ENCODE measurements at regions of chr3 and their contacts with region 1.

Region 1: GRCh38 chr3:138923531-138923994 is 23.4 kb downstream of the FOXL2 start:
- DNase-seq: peak; percentile 68 to 91 (median 76)
- ATAC-seq: peak; percentile 95
- H3K4me3 ChIP-seq: no peak overlapping the region
- H3K27ac ChIP-seq: no peak overlapping the region
- H3K4me1 ChIP-seq: peaks cover 2 to 3% of the 10 kb centered on the region in 2 experiments; a peak in 4 of 5 replicates
- H3K27me3 ChIP-seq: no peaks in the 10 kb centered on the region
- CTCF ChIP-seq: peak; percentile 86 to 95 (median 95)
- EP300 ChIP-seq: no peak
- POLR2A ChIP-seq: no peak
- RAD21 ChIP-seq: peak; percentile 78 to 93

Region 2: GRCh38 chr3:138417559-138417982 is 506.0 kb before region 1 on chr3:
- CTCF ChIA-PET with region 1: interaction called, 3 read pairs
- POLR2A ChIA-PET with region 1: no interaction called
- in situ Hi-C with region 1: no loop called
- intact Hi-C with region 1: loop called (anchors 2 kb)
- DNase-seq: peak; percentile 67 to 79 (median 70)
- ATAC-seq: peak; percentile 98
- H3K4me3 ChIP-seq: no peak overlapping the region
- H3K27ac ChIP-seq: no peak overlapping the region
- H3K4me1 ChIP-seq: no peaks in the 10 kb centered on the region; a peak in 1 of 5 replicates
- H3K27me3 ChIP-seq: no peaks in the 10 kb centered on the region
- CTCF ChIP-seq: peak; percentile 87 to 96 (median 88)
- EP300 ChIP-seq: no peak
- POLR2A ChIP-seq: no peak
- RAD21 ChIP-seq: peak; percentile 72 to 88

Region 3: DNA sequence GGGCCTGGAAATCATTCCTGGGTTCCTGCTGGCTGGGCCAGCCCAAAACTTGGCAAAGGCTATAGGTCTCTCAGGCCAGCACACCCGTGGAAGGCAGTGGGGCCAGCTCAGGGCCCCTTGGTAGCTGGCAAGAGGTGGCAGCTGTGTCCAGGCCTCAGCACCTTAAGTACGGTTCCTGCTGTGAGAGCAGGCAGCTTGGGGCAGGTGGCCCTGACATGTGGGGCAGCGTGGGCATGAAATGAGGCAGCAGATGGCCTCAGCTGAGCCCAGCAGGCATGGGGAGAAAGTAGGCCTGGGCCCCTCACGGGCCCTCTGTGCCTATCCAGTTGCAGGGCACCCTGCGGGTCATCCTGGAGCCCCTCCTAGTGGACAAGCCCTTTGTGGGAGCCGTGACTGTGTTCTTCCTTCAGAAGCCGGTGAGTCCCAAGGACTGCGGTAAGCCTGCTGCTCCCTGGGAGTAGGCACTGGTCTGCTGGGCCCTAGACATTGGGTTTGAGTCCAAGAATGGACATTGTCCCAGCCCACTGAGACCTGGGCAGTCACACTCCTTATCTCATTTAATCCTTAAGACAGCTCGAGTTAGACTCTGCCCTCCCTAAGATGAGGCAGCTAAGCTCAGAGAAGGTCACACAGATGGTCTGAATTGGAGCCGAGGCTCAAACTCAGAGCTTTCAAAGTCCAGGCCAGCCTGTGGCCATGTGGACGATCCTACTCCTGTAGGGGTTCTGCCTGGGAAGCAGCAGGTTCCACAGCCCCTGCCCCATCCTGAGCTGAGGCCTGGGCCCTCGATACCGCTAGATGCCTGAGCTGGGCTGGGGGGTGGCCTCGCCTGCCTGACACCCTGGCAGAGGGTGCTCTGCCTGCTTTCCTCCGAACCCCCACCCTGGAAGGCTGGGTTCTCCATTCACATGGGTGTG is 463.7 kb before region 1 on chr3:
- CTCF ChIA-PET with region 1: interaction called, 4 read pairs
- POLR2A ChIA-PET with region 1: no interaction called
- in situ Hi-C with region 1: no loop called
- intact Hi-C with region 1: loop called (anchors 5 kb)
- DNase-seq: no peak
- ATAC-seq: peak; percentile 67
- H3K4me3 ChIP-seq: no peak overlapping the region
- H3K27ac ChIP-seq: no peak overlapping the region
- H3K4me1 ChIP-seq: peaks cover 0 to 4% of the 10 kb centered on the region in 2 experiments; a peak in 2 of 5 replicates
- H3K27me3 ChIP-seq: peaks cover 0 to 48% of the 10 kb centered on the region in 2 experiments; a peak in 3 of 5 replicates
- CTCF ChIP-seq: peak; percentile 15 to 34 (median 25); a peak in 1 of 6 replicates
- EP300 ChIP-seq: no peak
- POLR2A ChIP-seq: no peak
- RAD21 ChIP-seq: peak in 1 of 2 experiments; percentile 49; a peak in 2 of 4 replicates

Region 4: GRCh38 chr3:138479438-138479863 is 444.1 kb before region 1 on chr3:
- CTCF ChIA-PET with region 1: no interaction called
- POLR2A ChIA-PET with region 1: no interaction called
- in situ Hi-C with region 1: no loop called
- intact Hi-C with region 1: loop called (anchors 2 kb)
- DNase-seq: peak; percentile 38 to 58 (median 44)
- ATAC-seq: peak; percentile 81
- H3K4me3 ChIP-seq: no peak overlapping the region
- H3K27ac ChIP-seq: no peak overlapping the region
- H3K4me1 ChIP-seq: no peaks in the 10 kb centered on the region
- H3K27me3 ChIP-seq: no peaks in the 10 kb centered on the region
- CTCF ChIP-seq: peak; percentile 67 to 82 (median 75)
- EP300 ChIP-seq: no peak
- POLR2A ChIP-seq: no peak
- RAD21 ChIP-seq: peak; percentile 26 to 76; a peak in 2 of 4 replicates

Region 5: DNA sequence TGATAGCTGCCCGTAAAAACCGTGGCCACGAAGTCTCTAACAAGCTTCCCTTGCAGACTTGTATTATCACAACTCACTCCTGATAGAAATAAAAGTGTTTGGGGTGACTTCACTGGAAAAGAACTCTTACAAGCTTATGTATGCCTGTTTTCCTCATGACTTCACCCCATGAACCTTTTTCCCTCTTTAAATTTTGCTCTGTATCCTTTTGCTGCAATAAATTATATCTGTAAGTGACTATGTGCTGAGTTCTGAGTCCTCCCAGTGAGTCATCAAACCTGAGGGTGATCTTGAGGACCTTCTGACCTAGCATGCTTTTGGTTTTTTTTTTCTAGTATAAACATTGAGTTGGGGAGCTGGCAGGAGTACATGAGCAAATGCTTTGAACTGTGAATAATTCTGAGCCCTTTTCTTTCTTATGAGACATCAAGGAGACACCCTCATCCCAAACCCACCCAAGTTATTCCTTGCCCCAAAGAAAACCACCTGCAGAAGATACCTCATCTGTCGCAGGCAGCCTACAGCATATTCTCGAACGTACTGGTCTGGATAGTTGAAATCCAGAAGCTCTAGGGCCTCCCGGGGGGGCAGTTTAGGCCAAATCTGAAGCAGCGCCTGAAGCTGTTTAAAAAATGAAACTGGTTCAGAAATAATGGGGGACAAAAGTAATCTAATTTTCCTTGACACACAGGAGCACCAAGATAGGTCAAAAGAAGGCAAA is 229.1 kb before region 1 on chr3:
- CTCF ChIA-PET with region 1: interaction called, 16 read pairs
- POLR2A ChIA-PET with region 1: interaction called, 8 read pairs
- in situ Hi-C with region 1: loop called (anchors 5 kb)
- intact Hi-C with region 1: no loop called
- DNase-seq: peak in 3 of 4 experiments; percentile 21 to 76 (median 53)
- ATAC-seq: peak; percentile 79
- H3K4me3 ChIP-seq: no peak overlapping the region
- H3K27ac ChIP-seq: peak overlapping the region; percentile 62; the same call in 2 of the 3 replicates
- H3K4me1 ChIP-seq: peaks cover 0 to 16% of the 10 kb centered on the region in 2 experiments; a peak in 4 of 5 replicates
- H3K27me3 ChIP-seq: no peaks in the 10 kb centered on the region
- CTCF ChIP-seq: no peak
- EP300 ChIP-seq: peak; percentile 31; the same call in 1 of the 2 replicates
- POLR2A ChIP-seq: no peak
- RAD21 ChIP-seq: no peak

Region 6: GRCh38 chr3:138935848-138936740 is 12.5 kb after region 1 on chr3:
- CTCF ChIA-PET with region 1: no interaction called
- POLR2A ChIA-PET with region 1: interaction called, 14 read pairs
- in situ Hi-C with region 1: no loop called
- intact Hi-C with region 1: no loop called
- DNase-seq: peak; percentile 85 to 91 (median 88)
- ATAC-seq: peak; percentile 88
- H3K4me3 ChIP-seq: peak overlapping the region; percentile 45
- H3K27ac ChIP-seq: peak overlapping the region; percentile 54
- H3K4me1 ChIP-seq: peaks cover 4 to 43% of the 10 kb centered on the region in 2 experiments; a peak in 3 of 5 replicates
- H3K27me3 ChIP-seq: no peaks in the 10 kb centered on the region
- CTCF ChIP-seq: peak; percentile 83 to 88 (median 87)
- EP300 ChIP-seq: no peak
- POLR2A ChIP-seq: peak; percentile 58
- RAD21 ChIP-seq: peak; percentile 55 to 68

Measured in K562 (cell line).